WTC11 (cell line): ENCODE measurements at regions of chr7 and their contacts with region 1.

Region 1: GRCh38 chr7:147432079-147432478 is 1158.5 kb upstream of the C7orf33 start:
- DNase-seq: peak; percentile 30
- ATAC-seq: peak; percentile 87
- H3K4me3 Mint-ChIP-seq: no peak overlapping the region
- H3K27ac Mint-ChIP-seq: no peak overlapping the region
- H3K4me1 Mint-ChIP-seq: no peaks in the 10 kb centered on the region
- H3K27me3 Mint-ChIP-seq: peaks cover 80% of the 10 kb centered on the region
- CTCF ChIP-seq: no peak

Region 2: GRCh38 chr7:148242294-148242801 is 810.3 kb after region 1 on chr7:
- CTCF ChIA-PET with region 1: interaction called, 12 read pairs
- POLR2A ChIA-PET with region 1: no interaction called
- DNase-seq: peak; percentile 23
- ATAC-seq: peak; percentile 95
- H3K4me3 Mint-ChIP-seq: peak overlapping the region; percentile 14; the same call in 1 of the 2 replicates
- H3K27ac Mint-ChIP-seq: no peak overlapping the region
- H3K4me1 Mint-ChIP-seq: peaks cover 12% of the 10 kb centered on the region
- H3K27me3 Mint-ChIP-seq: peaks cover 9% of the 10 kb centered on the region
- CTCF ChIP-seq: peak; percentile 78